ENCODE measurements at regions of chr1 and their contacts with region 1.

Region 1: DNA sequence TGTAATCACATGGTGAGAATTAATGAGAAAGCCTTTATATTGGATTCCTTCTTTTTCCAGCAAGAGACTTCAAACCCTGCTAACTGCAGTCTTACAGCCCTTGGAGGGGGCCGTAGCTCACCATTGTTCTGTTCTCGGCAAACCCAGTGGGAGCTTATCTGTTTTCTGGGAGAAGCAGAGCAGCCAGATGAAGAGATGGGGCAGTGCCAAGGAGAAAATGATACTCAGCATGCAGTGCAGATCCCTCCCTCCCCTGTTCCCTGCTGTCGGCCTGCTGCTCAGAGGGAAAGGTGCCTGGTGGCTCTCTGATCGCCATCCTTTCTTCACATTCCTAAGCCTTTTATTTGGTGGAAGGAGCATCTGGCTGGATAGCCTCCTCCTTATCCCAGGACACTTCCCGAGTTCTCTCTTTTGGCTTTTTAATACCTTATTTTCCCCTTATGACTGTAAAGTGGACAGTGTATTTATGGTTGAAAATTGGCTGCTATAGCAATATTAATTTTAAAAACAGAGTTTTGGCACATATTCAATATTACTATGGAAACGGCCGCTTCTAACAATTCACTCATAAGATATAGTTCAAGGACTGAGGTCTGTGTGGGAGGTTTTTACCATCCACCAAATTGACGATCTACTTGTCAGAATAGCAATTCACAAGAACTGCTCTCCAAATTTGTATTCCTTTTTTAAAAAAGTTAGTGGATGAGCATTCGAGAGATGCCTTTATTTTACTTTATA is 203.4 kb downstream of the CRB1 start:
- DNase-seq: peak; percentile 64
- H3K4me3 ChIP-seq: no peak overlapping the region
- H3K27ac ChIP-seq: no peak overlapping the region
- H3K4me1 ChIP-seq: peaks cover 9% of the 10 kb centered on the region
- H3K27me3 ChIP-seq: no peaks in the 10 kb centered on the region
- CTCF ChIP-seq: no peak

Region 2: DNA sequence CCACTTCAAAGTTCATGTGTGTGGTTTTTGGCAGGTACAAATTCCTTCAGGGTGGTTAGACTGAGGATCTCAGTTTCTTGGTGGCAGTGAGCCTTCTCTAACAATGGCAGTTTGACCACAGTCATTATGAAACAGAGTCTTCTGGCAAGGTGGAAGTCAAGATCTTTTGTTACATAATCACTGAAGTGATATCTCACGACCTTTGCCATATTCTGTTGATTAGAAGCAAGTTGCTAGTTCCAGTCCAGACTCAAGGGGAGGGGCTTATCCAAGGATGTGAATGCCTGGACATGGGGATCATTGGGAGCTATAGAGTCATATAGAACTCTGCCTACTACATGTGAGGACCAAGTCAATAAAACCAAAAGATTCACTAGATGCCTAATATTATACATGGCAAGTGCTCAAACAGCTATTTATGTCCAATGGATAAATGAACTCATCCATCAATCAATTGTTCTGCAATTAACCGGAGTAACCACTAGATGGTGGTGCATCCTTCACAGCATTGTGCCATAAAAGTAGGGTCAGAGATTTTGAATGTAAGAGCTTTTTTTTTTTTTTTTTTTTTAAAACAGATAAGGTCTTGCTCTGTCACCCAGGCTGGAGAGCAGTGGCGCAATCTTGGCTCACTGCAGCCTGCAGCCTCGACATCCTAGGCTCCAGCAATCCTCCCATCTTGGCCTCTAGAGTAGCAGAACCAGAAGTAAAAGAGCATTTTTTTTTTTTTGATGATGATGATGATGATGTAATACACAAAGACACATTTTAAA is 71.5 kb before region 1 on chr1:
- CTCF ChIA-PET with region 1: interaction called, 12 read pairs
- POLR2A ChIA-PET with region 1: no interaction called
- intact Hi-C with region 1: no loop called
- DNase-seq: peak; percentile 69
- H3K4me3 ChIP-seq: no peak overlapping the region
- H3K27ac ChIP-seq: no peak overlapping the region
- H3K4me1 ChIP-seq: no peaks in the 10 kb centered on the region
- H3K27me3 ChIP-seq: no peaks in the 10 kb centered on the region
- CTCF ChIP-seq: peak; percentile 75

Region 3: GRCh38 chr1:197692965-197693364 is 221.5 kb after region 1 on chr1:
- CTCF ChIA-PET with region 1: no interaction called
- POLR2A ChIA-PET with region 1: no interaction called
- intact Hi-C with region 1: no loop called
- DNase-seq: no peak
- H3K4me3 ChIP-seq: no peak overlapping the region
- H3K27ac ChIP-seq: no peak overlapping the region
- H3K4me1 ChIP-seq: no peaks in the 10 kb centered on the region
- H3K27me3 ChIP-seq: no peaks in the 10 kb centered on the region
- CTCF ChIP-seq: 0 out of 2 replicates have a peak, but pooled peaks have one; percentile 18